ENCODE measurements at regions of chr3 and their contacts with region 1.

Region 1: DNA sequence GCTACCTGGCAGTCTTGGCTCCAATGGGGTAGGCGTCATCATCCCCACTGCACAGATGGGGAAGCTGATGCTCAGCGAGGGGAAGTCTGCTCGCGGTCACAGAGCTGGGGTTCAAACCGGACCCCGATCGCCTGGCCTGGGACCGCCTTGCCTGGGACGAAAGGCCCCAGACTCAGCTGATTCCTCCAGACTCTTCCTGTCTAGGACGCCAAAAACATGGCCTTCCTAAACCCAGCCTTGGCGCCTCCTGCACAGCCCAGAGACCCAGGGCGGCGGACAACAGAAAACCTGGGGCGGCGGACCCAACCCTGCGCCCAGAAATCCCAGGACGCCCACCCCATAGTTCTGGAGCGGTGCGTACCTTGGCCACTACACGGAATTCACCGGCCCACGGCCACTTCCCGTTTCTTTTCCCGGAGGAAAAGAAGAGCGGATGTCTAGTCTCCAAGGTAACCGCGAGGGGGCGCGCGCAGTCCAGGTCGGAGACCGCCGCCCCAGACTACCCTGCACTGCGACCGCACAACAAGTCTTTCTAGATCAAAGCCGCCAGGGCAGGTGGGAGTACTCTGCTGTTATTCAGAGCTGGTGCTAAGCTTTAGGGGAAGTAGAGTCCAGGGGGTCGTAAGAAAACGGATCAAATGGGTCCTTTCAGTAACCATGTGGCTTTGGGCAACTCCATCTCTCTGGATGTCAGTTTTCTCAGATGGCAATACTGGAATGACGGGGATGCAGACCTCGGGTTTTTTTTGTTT is 4.9 kb upstream of the IL17RD start:
- DNase-seq: peak; percentile 76
- H3K4me3 ChIP-seq: peak overlapping the region; percentile 55
- H3K27ac ChIP-seq: no peak overlapping the region
- H3K4me1 ChIP-seq: peaks cover 17% of the 10 kb centered on the region
- CTCF ChIP-seq: peak; percentile 95

Region 2: DNA sequence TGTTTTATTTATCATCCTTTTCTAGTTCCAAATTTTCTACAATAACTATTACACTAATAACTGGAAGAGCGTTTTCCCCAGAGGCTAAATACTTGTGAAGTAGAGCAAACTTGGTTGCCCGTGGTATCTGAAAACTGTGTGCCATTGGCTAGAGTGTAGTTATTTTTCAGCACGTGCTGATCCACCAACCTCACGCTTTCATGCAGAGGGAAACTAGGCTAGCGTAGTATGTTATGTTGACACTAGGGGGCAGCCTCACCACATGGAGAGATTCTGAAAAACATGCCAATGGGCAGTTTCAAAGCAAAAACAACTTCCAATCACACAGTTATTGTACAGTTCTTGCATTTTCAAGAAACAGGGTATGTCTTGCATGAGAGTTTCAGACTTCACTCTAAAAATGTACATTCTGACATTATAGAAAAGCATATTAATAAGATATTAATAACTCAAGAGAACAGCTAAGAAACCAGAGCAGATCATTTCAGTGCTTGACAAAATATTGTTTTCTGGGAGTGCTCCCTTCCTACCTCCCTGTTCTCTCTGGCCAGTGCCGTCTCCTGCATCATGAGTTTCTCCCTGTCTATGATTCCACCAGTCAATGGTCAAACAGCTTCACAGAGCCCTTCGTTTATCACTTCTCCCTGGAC is 69.9 kb before region 1 on chr3:
- CTCF ChIA-PET with region 1: no interaction called
- POLR2A ChIA-PET with region 1: no interaction called
- intact Hi-C with region 1: loop called (anchors 2 kb)
- DNase-seq: peak; percentile 86
- H3K4me3 ChIP-seq: no peak overlapping the region
- H3K27ac ChIP-seq: no peak overlapping the region
- H3K4me1 ChIP-seq: peaks cover 17% of the 10 kb centered on the region
- CTCF ChIP-seq: peak; percentile 96

Region 3: DNA sequence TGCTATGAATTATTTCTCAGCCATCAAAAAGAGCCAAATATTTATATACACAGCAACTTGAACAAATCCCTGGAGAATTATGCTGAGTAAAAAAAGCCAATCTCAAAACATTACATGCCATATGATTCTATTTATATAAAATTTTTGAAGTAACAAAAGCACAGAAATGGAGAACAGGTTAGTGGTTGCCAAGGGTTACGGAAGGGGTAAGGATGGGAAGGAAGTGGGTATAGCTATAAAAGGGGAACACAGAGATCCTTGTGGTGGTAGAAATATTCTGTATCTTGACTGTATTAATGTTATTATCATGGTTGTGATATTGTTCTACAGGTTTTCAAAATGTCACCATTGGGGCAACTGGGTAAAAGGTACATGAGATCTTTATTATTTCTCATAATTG is 184.7 kb after region 1 on chr3:
- CTCF ChIA-PET with region 1: no interaction called
- POLR2A ChIA-PET with region 1: no interaction called
- intact Hi-C with region 1: loop called (anchors 10 kb)
- DNase-seq: no peak
- H3K4me3 ChIP-seq: no peak overlapping the region
- H3K27ac ChIP-seq: no peak overlapping the region
- H3K4me1 ChIP-seq: no peaks in the 10 kb centered on the region
- CTCF ChIP-seq: no peak

Region 4: GRCh38 chr3:57555738-57556458 is 385.9 kb after region 1 on chr3 and contains the start of gene PDE12:
- CTCF ChIA-PET with region 1: no interaction called
- POLR2A ChIA-PET with region 1: no interaction called
- intact Hi-C with region 1: loop called (anchors 10 kb)
- DNase-seq: peak; percentile 95
- H3K4me3 ChIP-seq: peak within 1 kb of the TSS; percentile 78
- H3K27ac ChIP-seq: peak within 1 kb of the TSS; percentile 77
- H3K4me1 ChIP-seq: peaks cover 31% of the 10 kb centered on the region
- CTCF ChIP-seq: no peak
- total RNA-seq, gene PDE12: 15.2 and 19.3 TPM in 2 replicates

Region 5: DNA sequence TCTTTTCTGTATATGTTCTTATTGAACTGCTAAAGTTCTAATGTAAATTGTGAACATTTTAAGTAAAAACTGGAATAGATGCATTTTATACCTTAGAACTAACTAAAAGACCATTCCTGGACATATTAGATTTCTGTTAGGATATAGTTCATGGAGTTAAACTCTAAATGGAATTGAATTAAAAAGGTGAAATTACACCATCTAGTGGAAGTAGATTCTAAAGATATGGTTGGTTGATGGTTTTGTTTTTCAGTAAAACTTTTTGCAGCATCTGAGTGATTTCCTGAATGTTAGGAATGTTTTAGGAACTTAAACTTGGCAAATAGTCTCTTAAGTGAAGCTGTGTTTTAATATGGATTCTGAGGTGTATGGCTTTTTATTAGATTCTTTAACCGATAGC is 682.8 kb after region 1 on chr3:
- CTCF ChIA-PET with region 1: no interaction called
- POLR2A ChIA-PET with region 1: no interaction called
- intact Hi-C with region 1: loop called (anchors 10 kb)
- DNase-seq: peak; percentile 9
- H3K4me3 ChIP-seq: no peak overlapping the region
- H3K27ac ChIP-seq: no peak overlapping the region
- H3K4me1 ChIP-seq: no peaks in the 10 kb centered on the region
- CTCF ChIP-seq: peak; percentile 74